ENCODE measurements at regions of chr17 and their contacts with region 1.

Region 1: DNA sequence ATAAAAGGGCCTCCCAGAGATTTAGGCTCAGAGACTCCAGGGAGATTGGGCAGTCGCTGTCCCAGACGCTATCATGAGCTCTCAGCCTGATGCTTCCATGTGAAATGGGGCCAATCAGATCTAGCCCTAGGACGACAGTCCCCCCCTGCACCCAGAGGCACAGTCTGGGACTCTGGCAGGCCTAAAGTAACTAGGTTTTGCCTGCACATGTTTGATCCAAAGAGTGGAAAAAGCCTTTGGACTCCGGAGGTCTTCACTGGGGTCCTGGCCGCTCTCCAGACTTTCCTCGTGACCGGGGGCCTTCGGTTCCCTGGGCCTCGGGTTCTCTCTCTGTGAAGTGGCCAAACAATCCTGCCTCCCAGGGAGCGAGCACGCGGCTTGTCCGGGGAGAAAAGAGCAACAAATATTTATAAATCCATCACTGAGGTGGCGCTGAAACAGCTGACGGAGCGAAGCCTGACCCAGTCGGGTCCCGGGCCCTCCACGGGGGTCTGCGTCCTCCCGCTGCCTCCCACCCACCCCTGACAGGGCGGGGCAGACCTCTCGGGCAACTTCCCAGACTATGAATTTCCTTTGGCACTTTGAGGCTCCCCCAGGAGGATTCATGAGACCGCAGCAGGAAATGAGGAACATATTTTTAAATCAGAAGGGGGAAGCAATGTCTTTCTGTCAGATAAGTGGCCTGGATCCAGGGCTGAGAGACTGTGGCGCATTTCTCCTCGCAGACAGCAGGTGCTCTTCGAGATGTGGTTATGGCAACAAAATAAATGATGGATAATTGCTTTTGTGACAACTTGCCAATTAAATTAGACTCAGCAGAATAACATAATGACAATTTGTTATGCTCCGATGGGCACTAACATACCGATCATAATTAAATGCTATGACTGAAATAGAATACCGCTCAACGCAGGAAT is 38.9 kb downstream of the MRPS23 start:
- DNase-seq: peak; percentile 4
- ATAC-seq: peak; percentile 51
- H3K4me3 ChIP-seq: no peak overlapping the region
- H3K27ac ChIP-seq: no peak overlapping the region
- H3K4me1 ChIP-seq: no peaks in the 10 kb centered on the region
- H3K27me3 ChIP-seq: peaks cover 26% of the 10 kb centered on the region
- CTCF ChIP-seq: no peak
- POLR2A ChIP-seq: no peak
- RAD21 ChIP-seq: no peak

Region 2: DNA sequence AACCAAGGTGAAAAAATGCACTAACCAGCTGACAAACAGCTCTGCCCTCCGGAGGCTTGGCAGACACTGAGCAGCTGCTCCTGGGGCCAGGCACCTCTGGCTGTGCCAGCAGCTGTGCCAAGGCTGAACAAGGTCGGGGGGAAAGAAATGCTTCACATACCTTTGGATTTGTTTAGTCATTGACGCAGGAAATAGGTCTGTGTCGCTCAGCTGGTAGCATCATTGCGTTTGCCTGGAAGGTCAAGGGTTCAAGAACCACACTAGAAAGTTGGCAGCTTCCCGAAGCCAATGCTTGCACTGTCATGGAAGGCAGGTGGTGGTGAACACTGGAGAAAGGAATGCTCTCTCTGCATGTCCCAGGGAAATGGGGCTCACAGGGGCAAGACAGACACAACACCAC is 1996.6 kb before region 1 on chr17:
- CTCF ChIA-PET with region 1: no interaction called
- POLR2A ChIA-PET with region 1: no interaction called
- dilution Hi-C with region 1: no loop called
- in situ Hi-C with region 1: loop called (anchors 25 kb)
- intact Hi-C with region 1: no loop called
- DNase-seq: no peak
- ATAC-seq: no peak
- H3K4me3 ChIP-seq: no peak overlapping the region
- H3K27ac ChIP-seq: no peak overlapping the region
- H3K4me1 ChIP-seq: no peaks in the 10 kb centered on the region
- H3K27me3 ChIP-seq: no peaks in the 10 kb centered on the region
- CTCF ChIP-seq: no peak
- POLR2A ChIP-seq: no peak
- RAD21 ChIP-seq: no peak

Measured in IMR-90 (cell line).